ENCODE measurements at regions of chr1 and their contacts with region 1.

Region 1: GRCh38 chr1:24586970-24587820 is 31.3 kb downstream of the NCMAP start:
- DNase-seq: no peak
- ATAC-seq: peak; percentile 96
- H3K4me3 Mint-ChIP-seq: no peak overlapping the region
- H3K27ac Mint-ChIP-seq: no peak overlapping the region
- H3K4me1 Mint-ChIP-seq: peaks cover 4% of the 10 kb centered on the region
- H3K27me3 Mint-ChIP-seq: peaks cover 5% of the 10 kb centered on the region
- CTCF ChIP-seq: no peak

Region 2: GRCh38 chr1:24150234-24151174 is 436.7 kb before region 1 on chr1:
- CTCF ChIA-PET with region 1: interaction called, 12 read pairs
- POLR2A ChIA-PET with region 1: no interaction called
- intact Hi-C with region 1: loop called (anchors 2 kb)
- DNase-seq: peak; percentile 89
- ATAC-seq: peak; percentile 98
- H3K4me3 Mint-ChIP-seq: peak overlapping the region; percentile 74
- H3K27ac Mint-ChIP-seq: peak overlapping the region; percentile 20
- H3K4me1 Mint-ChIP-seq: peaks cover 27% of the 10 kb centered on the region
- H3K27me3 Mint-ChIP-seq: peaks cover 3% of the 10 kb centered on the region
- CTCF ChIP-seq: no peak

Region 3: GRCh38 chr1:24409535-24409934 is 177.7 kb before region 1 on chr1:
- CTCF ChIA-PET with region 1: interaction called, 74 read pairs
- POLR2A ChIA-PET with region 1: no interaction called
- intact Hi-C with region 1: no loop called
- DNase-seq: no peak
- ATAC-seq: no peak
- H3K4me3 Mint-ChIP-seq: no peak overlapping the region
- H3K27ac Mint-ChIP-seq: no peak overlapping the region
- H3K4me1 Mint-ChIP-seq: peaks cover 17% of the 10 kb centered on the region
- H3K27me3 Mint-ChIP-seq: no peaks in the 10 kb centered on the region
- CTCF ChIP-seq: no peak

Region 4: GRCh38 chr1:24526940-24527542 is 60.2 kb before region 1 on chr1:
- CTCF ChIA-PET with region 1: interaction called, 13 read pairs
- POLR2A ChIA-PET with region 1: no interaction called
- intact Hi-C with region 1: no loop called
- DNase-seq: no peak
- ATAC-seq: no peak
- H3K4me3 Mint-ChIP-seq: no peak overlapping the region
- H3K27ac Mint-ChIP-seq: no peak overlapping the region
- H3K4me1 Mint-ChIP-seq: peaks cover 4% of the 10 kb centered on the region
- H3K27me3 Mint-ChIP-seq: no peaks in the 10 kb centered on the region
- CTCF ChIP-seq: no peak

Region 5: GRCh38 chr1:24635195-24635843 is 48.1 kb after region 1 on chr1:
- CTCF ChIA-PET with region 1: interaction called, 3 read pairs
- POLR2A ChIA-PET with region 1: no interaction called
- intact Hi-C with region 1: loop called (anchors 1 kb)
- DNase-seq: no peak
- ATAC-seq: peak; percentile 69
- H3K4me3 Mint-ChIP-seq: no peak overlapping the region
- H3K27ac Mint-ChIP-seq: no peak overlapping the region
- H3K4me1 Mint-ChIP-seq: peaks cover 2% of the 10 kb centered on the region
- H3K27me3 Mint-ChIP-seq: peaks cover 2% of the 10 kb centered on the region
- CTCF ChIP-seq: no peak

Region 6: GRCh38 chr1:24861821-24862727 is 274.9 kb after region 1 on chr1:
- CTCF ChIA-PET with region 1: no interaction called
- POLR2A ChIA-PET with region 1: no interaction called
- intact Hi-C with region 1: no loop called
- DNase-seq: no peak
- ATAC-seq: no peak
- H3K4me3 Mint-ChIP-seq: no peak overlapping the region
- H3K27ac Mint-ChIP-seq: no peak overlapping the region
- H3K4me1 Mint-ChIP-seq: peaks cover 7% of the 10 kb centered on the region
- H3K27me3 Mint-ChIP-seq: peaks cover 15% of the 10 kb centered on the region
- CTCF ChIP-seq: no peak